SK-N-SH (cell line): ENCODE measurements at regions of chr14 and their contacts with region 1.

Region 1: GRCh38 chr14:96567289-96567899 is 65.2 kb downstream of the PAPOLA start:
- DNase-seq: no peak
- H3K4me3 ChIP-seq: no peak overlapping the region
- H3K27ac ChIP-seq: no peak overlapping the region; a peak in 1 of 4 replicates
- H3K4me1 ChIP-seq: peaks cover 6% of the 10 kb centered on the region in 2 experiments; a peak in 3 of 4 replicates
- H3K27me3 ChIP-seq: no peaks in the 10 kb centered on the region
- CTCF ChIP-seq: peak; percentile 76
- EP300 ChIP-seq: no peak
- RAD21 ChIP-seq: peak; percentile 75

Region 2: DNA sequence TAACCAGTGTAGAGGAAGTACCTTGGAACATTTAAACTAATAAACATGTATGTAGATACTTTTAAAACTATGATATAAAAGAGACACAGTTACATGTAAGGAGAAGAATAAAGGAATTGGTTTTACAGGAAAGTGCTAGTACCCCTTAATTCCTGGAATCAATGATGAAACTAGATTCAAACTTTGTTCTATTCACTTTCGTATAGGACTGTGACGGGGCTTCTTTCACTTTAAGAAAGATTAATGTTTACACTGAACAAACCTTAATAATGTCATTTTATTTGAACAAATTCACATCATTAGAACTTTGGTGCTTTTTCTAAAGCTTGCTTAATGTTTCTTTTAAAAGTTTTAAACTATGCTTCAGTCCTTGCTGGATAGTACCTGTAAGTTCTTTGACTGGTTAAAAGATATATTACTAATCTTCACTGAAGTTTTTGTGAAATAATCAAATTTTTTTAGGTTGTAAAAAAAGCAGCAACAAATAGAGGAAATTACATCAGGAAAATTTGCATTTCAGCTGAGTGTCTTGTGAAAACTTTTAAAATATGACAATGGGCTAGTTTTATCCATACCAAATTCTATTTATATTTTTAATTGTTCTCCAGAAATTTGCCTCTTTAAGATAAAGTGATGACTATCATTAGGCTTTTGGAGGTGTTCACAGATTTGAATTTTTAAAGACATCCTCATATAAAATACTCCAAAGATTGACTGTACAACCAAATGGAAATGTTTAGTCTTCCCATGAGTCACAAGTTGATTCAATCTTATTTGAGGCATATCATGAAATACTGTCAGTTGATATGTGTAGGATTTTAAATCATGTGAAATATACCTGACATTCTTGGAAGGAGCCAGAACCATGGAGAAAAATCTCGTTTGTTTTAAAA is 29.1 kb before region 1 on chr14:
- CTCF ChIA-PET with region 1: interaction called, 10 read pairs
- POLR2A ChIA-PET with region 1: no interaction called
- DNase-seq: no peak
- H3K4me3 ChIP-seq: no peak overlapping the region
- H3K27ac ChIP-seq: no peak overlapping the region; a peak in 1 of 4 replicates
- H3K4me1 ChIP-seq: peaks cover 0 to 5% of the 10 kb centered on the region in 2 experiments; a peak in 2 of 4 replicates
- H3K27me3 ChIP-seq: no peaks in the 10 kb centered on the region
- CTCF ChIP-seq: no peak
- EP300 ChIP-seq: no peak
- RAD21 ChIP-seq: no peak

Region 3: DNA sequence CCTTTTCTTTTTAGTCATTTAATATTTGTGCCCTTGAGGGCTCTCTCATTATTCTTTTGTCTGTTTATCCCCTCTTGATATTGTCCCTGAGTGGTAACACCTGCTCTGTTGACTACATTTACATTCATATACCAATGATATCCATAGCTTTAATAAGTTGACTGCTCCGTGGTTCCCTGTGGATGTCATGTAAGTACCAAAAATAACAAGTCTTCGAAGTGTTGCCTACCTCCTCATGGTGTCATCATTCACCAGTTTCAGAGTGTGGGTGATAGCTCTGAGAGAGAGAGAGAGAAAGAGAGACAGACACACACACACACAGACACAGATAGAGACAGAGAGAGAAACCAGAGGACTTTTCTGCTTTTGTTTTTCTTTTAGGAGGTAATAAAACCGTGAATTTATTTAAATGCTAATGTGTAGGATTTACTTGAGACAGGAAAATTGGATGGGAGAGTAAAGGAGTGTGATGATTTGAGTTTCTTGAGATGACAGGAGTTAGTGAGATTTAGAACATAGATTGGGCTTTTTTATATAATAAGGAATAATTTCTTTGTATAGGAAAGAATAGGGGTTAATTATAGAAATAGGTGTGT is 13.0 kb before region 1 on chr14:
- CTCF ChIA-PET with region 1: interaction called, 21 read pairs
- POLR2A ChIA-PET with region 1: no interaction called
- DNase-seq: no peak
- H3K4me3 ChIP-seq: no peak overlapping the region
- H3K27ac ChIP-seq: no peak overlapping the region
- H3K4me1 ChIP-seq: no peaks in the 10 kb centered on the region
- H3K27me3 ChIP-seq: no peaks in the 10 kb centered on the region
- CTCF ChIP-seq: no peak
- EP300 ChIP-seq: no peak
- RAD21 ChIP-seq: no peak

Region 4: DNA sequence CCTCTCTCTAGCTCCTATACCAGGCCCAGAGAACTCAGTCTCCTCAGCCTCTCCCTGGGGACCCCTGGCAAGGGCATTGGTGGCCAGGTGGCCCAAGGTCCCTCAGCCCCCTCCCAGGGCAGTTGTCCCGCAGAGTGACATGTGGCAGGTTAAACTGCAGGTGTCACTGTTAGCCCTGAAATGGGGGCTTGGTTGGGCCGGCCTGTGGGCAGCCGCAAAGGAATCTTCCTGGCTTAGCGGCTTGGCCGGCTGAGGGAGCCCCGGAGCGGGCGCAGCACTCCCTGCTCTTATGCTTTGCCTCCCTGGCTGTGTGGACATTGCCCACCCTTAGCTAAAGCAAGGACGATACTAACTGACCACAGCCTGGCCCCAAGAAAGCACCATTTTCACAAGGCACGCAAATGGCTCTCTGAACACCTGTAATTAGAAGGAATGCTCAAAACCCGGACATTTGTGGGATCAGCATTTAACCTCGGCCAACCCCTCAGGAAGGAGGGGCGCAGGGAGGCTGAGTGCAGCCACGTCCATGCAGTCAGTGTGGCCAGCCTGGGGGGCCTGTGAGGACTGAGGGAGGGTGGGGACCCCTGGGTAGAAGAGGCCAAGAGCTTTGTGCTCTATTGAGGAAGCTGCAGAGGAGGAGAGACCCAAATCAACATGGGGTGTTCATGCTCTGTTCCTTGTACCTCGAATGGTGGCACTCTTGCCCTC is 17.0 kb after region 1 on chr14:
- CTCF ChIA-PET with region 1: interaction called, 118 read pairs
- POLR2A ChIA-PET with region 1: no interaction called
- DNase-seq: peak; percentile 88
- H3K4me3 ChIP-seq: peak overlapping the region in 1 of 2 experiments; percentile 40; a peak in 1 of 4 replicates
- H3K27ac ChIP-seq: no peak overlapping the region
- H3K4me1 ChIP-seq: peaks cover 0 to 2% of the 10 kb centered on the region in 2 experiments; a peak in 1 of 4 replicates
- H3K27me3 ChIP-seq: no peaks in the 10 kb centered on the region; the same call in 1 of the 2 replicates
- CTCF ChIP-seq: peak; percentile 44
- EP300 ChIP-seq: no peak
- RAD21 ChIP-seq: peak; percentile 97

Region 5: GRCh38 chr14:96735526-96735925 is 168.1 kb after region 1 on chr14:
- CTCF ChIA-PET with region 1: interaction called, 40 read pairs
- POLR2A ChIA-PET with region 1: no interaction called
- DNase-seq: peak; percentile 42
- H3K4me3 ChIP-seq: no peak overlapping the region
- H3K27ac ChIP-seq: no peak overlapping the region
- H3K4me1 ChIP-seq: peaks cover 0 to 3% of the 10 kb centered on the region in 2 experiments; a peak in 1 of 4 replicates
- H3K27me3 ChIP-seq: peaks cover 23% of the 10 kb centered on the region; the same call in 1 of the 2 replicates
- CTCF ChIP-seq: no peak
- EP300 ChIP-seq: no peak
- RAD21 ChIP-seq: no peak

Region 6: GRCh38 chr14:96741151-96741977 is 174.0 kb after region 1 on chr14:
- CTCF ChIA-PET with region 1: interaction called, 40 read pairs
- POLR2A ChIA-PET with region 1: no interaction called
- DNase-seq: peak; percentile 91
- H3K4me3 ChIP-seq: peak overlapping the region; percentile 57 to 72
- H3K27ac ChIP-seq: no peak overlapping the region
- H3K4me1 ChIP-seq: peaks cover 0 to 3% of the 10 kb centered on the region in 2 experiments; a peak in 1 of 4 replicates
- H3K27me3 ChIP-seq: peaks cover 17% of the 10 kb centered on the region; the same call in 1 of the 2 replicates
- CTCF ChIP-seq: peak; percentile 77
- EP300 ChIP-seq: no peak
- RAD21 ChIP-seq: peak; percentile 79

Region 7: GRCh38 chr14:96852823-96853422 is 285.5 kb after region 1 on chr14:
- CTCF ChIA-PET with region 1: interaction called, 10 read pairs
- POLR2A ChIA-PET with region 1: no interaction called
- DNase-seq: peak; percentile 16
- H3K4me3 ChIP-seq: no peak overlapping the region
- H3K27ac ChIP-seq: no peak overlapping the region
- H3K4me1 ChIP-seq: peaks cover 0 to 8% of the 10 kb centered on the region in 2 experiments; a peak in 1 of 4 replicates
- H3K27me3 ChIP-seq: no peaks in the 10 kb centered on the region
- CTCF ChIP-seq: peak; percentile 82
- EP300 ChIP-seq: no peak
- RAD21 ChIP-seq: peak; percentile 66